PC-9 (cell line): ENCODE measurements at regions of chr5 and their contacts with region 1.

Region 1: DNA sequence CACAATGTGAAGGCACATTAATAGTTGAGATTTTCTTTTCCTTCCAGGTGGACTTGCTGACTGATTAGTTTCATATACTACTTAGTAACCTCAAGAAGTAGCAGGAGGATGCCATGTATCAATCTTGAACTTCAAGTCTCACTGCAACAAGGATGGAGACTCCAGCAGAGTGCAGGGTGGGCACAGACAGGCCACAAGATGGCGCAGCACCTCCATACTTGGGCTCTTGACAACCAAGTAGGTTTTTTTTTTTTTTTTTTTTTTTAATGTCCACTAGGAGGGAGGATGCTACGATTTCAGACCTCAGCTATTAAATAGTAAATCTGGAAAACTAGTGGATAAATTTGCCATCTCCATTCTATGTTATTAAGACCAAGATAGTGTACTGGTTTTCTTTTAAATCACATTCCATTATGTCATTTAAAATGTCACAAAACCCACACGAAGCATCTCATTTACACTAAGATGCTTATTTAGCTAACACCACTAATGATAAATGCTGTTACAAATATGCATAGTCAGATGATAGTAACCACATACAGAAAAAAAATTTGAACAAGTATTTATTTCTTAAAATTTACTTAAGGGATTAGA is 58.6 kb downstream of the IL6ST start:
- DNase-seq: peak; percentile 71 to 73
- H3K4me3 ChIP-seq: no peak overlapping the region
- H3K27ac ChIP-seq: no peak overlapping the region
- H3K4me1 ChIP-seq: peaks cover 23% of the 10 kb centered on the region
- H3K27me3 ChIP-seq: no peaks in the 10 kb centered on the region
- CTCF ChIP-seq: peak; percentile 86

Region 2: GRCh38 chr5:55771175-55771655 is 165.0 kb before region 1 on chr5:
- CTCF ChIA-PET with region 1: interaction called, 26 read pairs
- POLR2A ChIA-PET with region 1: no interaction called
- intact Hi-C with region 1: no loop called
- DNase-seq: no peak
- H3K4me3 ChIP-seq: no peak overlapping the region
- H3K27ac ChIP-seq: no peak overlapping the region
- H3K4me1 ChIP-seq: 0 out of 2 replicates have a peak, but pooled peaks cover 9% of the 10 kb centered on the region
- H3K27me3 ChIP-seq: no peaks in the 10 kb centered on the region
- CTCF ChIP-seq: no peak

Region 3: DNA sequence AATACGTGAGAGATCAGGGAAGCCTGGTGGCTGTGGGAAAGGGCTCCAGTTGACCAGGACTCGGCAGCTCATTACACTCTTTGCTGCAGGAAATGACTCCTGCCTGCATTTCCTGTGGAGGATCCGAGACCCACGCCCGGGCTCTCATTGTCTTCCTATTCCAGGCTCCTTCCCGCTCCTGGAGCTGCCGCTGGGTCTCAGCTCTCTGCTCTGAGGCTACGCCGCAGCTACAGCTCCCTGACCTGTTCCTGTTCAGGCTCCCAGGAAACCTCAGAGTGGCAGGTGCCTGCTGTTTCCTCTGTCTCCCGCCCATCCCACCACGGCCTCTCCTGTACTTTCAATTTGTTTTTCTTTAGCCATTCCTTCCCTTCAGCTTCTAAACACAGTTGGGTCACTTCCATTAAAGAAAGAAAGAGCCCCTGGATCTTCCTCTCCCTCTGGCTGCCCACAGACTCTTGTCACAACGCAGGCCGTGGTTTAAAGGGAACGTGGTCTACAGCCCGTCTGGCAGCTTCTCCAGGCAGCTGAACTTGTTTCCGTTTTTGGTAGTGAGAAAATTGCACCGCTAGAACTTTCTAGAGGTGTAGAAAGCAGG is 12.9 kb before region 1 on chr5:
- CTCF ChIA-PET with region 1: no interaction called
- POLR2A ChIA-PET with region 1: no interaction called
- intact Hi-C with region 1: no loop called
- DNase-seq: peak in 1 of 2 experiments; percentile 29
- H3K4me3 ChIP-seq: no peak overlapping the region
- H3K27ac ChIP-seq: no peak overlapping the region
- H3K4me1 ChIP-seq: no peaks in the 10 kb centered on the region
- H3K27me3 ChIP-seq: no peaks in the 10 kb centered on the region
- CTCF ChIP-seq: no peak

Region 4: DNA sequence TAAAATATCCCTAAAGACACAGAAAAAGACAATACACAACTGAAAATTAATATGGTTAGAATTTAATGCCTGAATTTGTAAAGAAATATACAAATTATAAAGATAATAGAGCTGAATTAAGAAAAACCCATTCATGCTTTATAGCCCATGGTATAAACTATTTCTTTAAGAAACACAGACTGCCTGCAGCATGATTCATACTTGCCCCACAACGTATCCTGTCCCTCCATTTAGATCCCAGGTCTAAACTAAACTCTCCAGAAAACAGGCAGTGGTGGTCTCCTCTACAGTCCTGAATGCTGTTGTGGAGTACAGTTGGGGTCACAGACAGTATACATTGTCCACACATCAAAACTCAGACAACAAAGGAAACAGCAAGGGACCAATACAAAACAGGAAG is 33.8 kb after region 1 on chr5:
- CTCF ChIA-PET with region 1: no interaction called
- POLR2A ChIA-PET with region 1: interaction called, 33 read pairs
- intact Hi-C with region 1: no loop called
- DNase-seq: no peak
- H3K4me3 ChIP-seq: no peak overlapping the region
- H3K27ac ChIP-seq: no peak overlapping the region
- H3K4me1 ChIP-seq: 0 out of 2 replicates have a peak, but pooled peaks cover 2% of the 10 kb centered on the region
- H3K27me3 ChIP-seq: no peaks in the 10 kb centered on the region
- CTCF ChIP-seq: no peak

Region 5: GRCh38 chr5:56123531-56124243 is 187.5 kb after region 1 on chr5:
- CTCF ChIA-PET with region 1: interaction called, 19 read pairs
- POLR2A ChIA-PET with region 1: no interaction called
- intact Hi-C with region 1: no loop called
- DNase-seq: peak; percentile 88 to 96
- H3K4me3 ChIP-seq: no peak overlapping the region
- H3K27ac ChIP-seq: peak overlapping the region; percentile 84
- H3K4me1 ChIP-seq: peaks cover 34% of the 10 kb centered on the region
- H3K27me3 ChIP-seq: no peaks in the 10 kb centered on the region
- CTCF ChIP-seq: no peak

Region 6: DNA sequence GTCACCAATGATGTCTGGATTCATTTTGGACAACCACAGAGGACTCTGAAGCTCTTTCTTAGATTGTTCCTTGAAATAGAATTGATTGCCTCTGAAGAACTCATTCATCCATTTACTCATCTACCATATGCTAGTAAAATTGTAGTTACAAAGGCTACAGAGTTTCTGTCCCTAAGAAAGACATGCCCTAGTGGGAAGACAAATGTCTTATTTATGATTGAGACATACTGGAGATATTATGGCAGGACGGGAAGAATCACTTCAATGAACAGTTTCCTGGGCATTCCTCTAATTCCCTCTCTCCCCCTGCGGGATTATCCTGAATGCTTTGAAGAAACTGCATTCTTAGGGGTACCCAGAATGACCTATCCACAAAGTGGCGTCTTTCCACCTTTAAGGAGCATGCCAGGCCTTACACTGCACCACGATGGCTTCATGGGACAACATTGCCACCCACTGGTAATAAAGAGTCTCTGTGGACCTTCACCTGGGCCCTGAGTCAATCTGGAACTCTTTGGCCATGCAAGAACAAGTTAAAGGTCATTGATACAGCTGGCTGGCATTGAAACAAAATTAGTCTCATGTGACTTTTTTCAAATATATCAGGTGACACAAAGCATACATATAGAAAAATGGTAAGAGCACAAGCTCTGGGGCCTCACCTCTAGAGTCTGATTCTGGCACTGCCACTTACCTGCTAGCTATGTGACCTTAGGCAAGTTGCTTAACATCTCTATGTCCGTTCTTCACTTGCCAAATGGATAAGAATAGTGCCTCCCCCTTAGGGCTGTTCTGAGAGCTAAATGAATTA is 264.9 kb after region 1 on chr5:
- CTCF ChIA-PET with region 1: interaction called, 9 read pairs
- POLR2A ChIA-PET with region 1: no interaction called
- intact Hi-C with region 1: loop called (anchors 1 kb)
- DNase-seq: peak; percentile 58 to 74
- H3K4me3 ChIP-seq: no peak overlapping the region
- H3K27ac ChIP-seq: no peak overlapping the region
- H3K4me1 ChIP-seq: peaks cover 16% of the 10 kb centered on the region
- H3K27me3 ChIP-seq: no peaks in the 10 kb centered on the region
- CTCF ChIP-seq: peak; percentile 88

Region 7: DNA sequence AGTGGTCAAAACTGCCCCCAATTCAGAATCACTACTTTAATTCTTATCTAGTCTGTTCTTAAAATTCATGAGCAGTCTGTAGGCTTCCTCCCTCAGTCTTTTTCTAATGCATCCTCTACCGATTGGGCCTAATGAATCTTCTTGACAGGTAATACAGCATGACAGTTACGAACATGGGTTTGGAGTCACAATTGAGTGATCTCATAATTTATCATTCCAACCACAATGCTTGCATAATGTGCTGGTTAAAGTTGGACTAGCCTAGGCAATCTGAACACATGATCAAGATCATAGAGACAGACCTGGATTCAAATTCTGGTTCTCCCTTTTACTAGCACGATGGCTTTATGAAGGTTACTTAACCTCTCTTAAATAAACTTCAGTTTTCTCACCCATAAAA is 940.1 kb after region 1 on chr5:
- CTCF ChIA-PET with region 1: no interaction called
- POLR2A ChIA-PET with region 1: no interaction called
- intact Hi-C with region 1: loop called (anchors 10 kb)
- DNase-seq: no peak
- H3K4me3 ChIP-seq: no peak overlapping the region
- H3K27ac ChIP-seq: no peak overlapping the region
- H3K4me1 ChIP-seq: no peaks in the 10 kb centered on the region
- H3K27me3 ChIP-seq: no peaks in the 10 kb centered on the region
- CTCF ChIP-seq: no peak

Region 8: GRCh38 chr5:57277085-57277484 is 1340.9 kb after region 1 on chr5:
- CTCF ChIA-PET with region 1: no interaction called
- POLR2A ChIA-PET with region 1: no interaction called
- intact Hi-C with region 1: loop called (anchors 10 kb)
- DNase-seq: no peak
- H3K4me3 ChIP-seq: no peak overlapping the region
- H3K27ac ChIP-seq: no peak overlapping the region
- H3K4me1 ChIP-seq: no peaks in the 10 kb centered on the region
- H3K27me3 ChIP-seq: no peaks in the 10 kb centered on the region
- CTCF ChIP-seq: peak; percentile 65